ENCODE measurements at regions of chr2 and their contacts with region 1.

Region 1: GRCh38 chr2:16773080-16773713 is 107.6 kb upstream of the CYRIA start:
- DNase-seq: no peak
- H3K4me3 ChIP-seq: no peak overlapping the region
- H3K27ac ChIP-seq: no peak overlapping the region
- H3K4me1 ChIP-seq: no peaks in the 10 kb centered on the region
- H3K27me3 ChIP-seq: peaks cover 43% of the 10 kb centered on the region
- CTCF ChIP-seq: peak; percentile 67

Region 2: GRCh38 chr2:16365366-16365765 is 407.8 kb before region 1 on chr2:
- intact Hi-C with region 1: no loop called
- DNase-seq: no peak
- H3K4me3 ChIP-seq: no peak overlapping the region
- H3K27ac ChIP-seq: no peak overlapping the region
- H3K4me1 ChIP-seq: no peaks in the 10 kb centered on the region
- H3K27me3 ChIP-seq: no peaks in the 10 kb centered on the region
- CTCF ChIP-seq: no peak

Region 3: DNA sequence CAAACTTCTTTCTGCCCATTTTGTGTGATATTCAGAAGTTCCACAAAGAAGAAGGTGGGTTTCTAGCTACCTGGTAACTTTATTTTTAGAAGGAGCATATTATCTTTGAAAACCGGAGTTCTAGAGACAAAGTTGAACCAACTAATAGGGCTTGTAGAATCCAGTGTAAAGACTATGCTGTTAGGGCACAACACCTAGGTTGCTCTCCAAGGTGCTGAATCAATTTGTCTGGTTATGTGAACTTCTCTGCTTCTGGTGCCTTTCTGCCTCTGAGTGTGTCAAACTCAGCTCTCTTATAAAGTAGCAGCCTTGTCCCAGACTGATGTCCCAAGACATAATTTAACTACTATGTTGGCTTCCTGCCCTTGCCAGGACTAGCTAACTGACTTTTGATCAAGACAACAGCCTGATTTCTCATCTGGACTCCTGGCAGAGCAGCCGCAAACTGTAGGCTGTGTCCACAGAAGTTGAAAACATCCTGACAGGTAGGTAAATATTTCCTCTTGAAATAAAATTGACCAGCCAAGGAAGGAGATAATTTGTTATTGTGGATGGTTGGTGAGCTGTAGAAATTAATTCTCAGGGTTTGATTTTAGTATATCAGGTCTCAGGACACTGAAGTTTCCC is 227.0 kb before region 1 on chr2:
- intact Hi-C with region 1: no loop called
- DNase-seq: no peak
- H3K4me3 ChIP-seq: no peak overlapping the region
- H3K27ac ChIP-seq: no peak overlapping the region
- H3K4me1 ChIP-seq: no peaks in the 10 kb centered on the region
- H3K27me3 ChIP-seq: no peaks in the 10 kb centered on the region
- CTCF ChIP-seq: no peak

Region 4: GRCh38 chr2:17309741-17310339 is 536.6 kb after region 1 on chr2:
- intact Hi-C with region 1: loop called (anchors 10 kb)
- DNase-seq: no peak
- H3K4me3 ChIP-seq: no peak overlapping the region
- H3K27ac ChIP-seq: no peak overlapping the region
- H3K4me1 ChIP-seq: no peaks in the 10 kb centered on the region
- H3K27me3 ChIP-seq: no peaks in the 10 kb centered on the region
- CTCF ChIP-seq: peak; percentile 76

Region 5: DNA sequence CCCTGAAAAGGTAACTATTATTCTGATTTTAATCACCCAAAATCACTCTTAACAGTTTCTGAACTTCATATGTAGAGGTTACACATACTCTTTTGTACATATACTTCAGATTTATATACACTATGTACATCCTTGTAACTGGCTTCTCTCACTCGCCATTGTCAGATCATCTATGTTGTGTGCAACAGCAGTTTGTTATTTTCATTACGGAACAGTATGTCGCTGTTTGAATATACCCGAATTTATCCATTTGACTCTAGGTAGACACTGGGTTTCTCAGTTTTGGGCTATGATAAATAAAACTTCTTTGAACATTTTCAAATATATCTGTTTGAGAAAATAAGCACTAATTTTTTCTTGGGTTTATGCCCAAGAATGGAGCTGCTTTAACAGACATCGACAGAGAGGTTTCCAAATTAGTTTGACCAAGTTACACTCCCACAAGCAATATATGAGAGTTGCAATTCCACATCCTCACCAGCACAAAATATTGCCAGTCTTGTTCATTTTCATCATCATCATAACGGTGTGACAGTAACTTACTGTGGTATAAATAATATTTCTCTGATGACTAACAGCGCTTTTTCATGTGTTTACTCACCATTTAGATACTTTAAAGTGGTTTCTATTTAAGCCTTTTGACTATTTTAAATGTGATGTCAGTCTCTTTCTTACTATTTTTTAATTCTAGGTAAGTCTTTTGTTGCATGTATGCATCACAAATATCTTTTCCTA is 899.6 kb after region 1 on chr2:
- intact Hi-C with region 1: loop called (anchors 10 kb)
- DNase-seq: no peak
- H3K4me3 ChIP-seq: no peak overlapping the region
- H3K27ac ChIP-seq: no peak overlapping the region
- H3K4me1 ChIP-seq: no peaks in the 10 kb centered on the region
- H3K27me3 ChIP-seq: no peaks in the 10 kb centered on the region
- CTCF ChIP-seq: no peak

Measured in left ventricle myocardium inferior (tissue), 1 donor.